ENCODE measurements at regions of chr5 and their contacts with region 1.

Region 1: GRCh38 chr5:123423278-123424149 is at the start of gene CEP120:
- DNase-seq: peak; percentile 96
- CTCF ChIP-seq: peak; percentile 82

Region 2: GRCh38 chr5:123387313-123387712 is 36.2 kb before region 1 on chr5:
- CTCF ChIA-PET with region 1: no interaction called
- POLR2A ChIA-PET with region 1: no interaction called
- DNase-seq: no peak
- CTCF ChIP-seq: no peak

Region 3: GRCh38 chr5:123398058-123398733 is 25.3 kb before region 1 on chr5:
- CTCF ChIA-PET with region 1: interaction called, 11 read pairs
- POLR2A ChIA-PET with region 1: no interaction called
- DNase-seq: no peak
- CTCF ChIP-seq: no peak

Region 4: GRCh38 chr5:123412206-123412605 is 11.3 kb before region 1 on chr5:
- CTCF ChIA-PET with region 1: interaction called, 13 read pairs
- POLR2A ChIA-PET with region 1: no interaction called
- DNase-seq: no peak
- CTCF ChIP-seq: no peak

Region 5: DNA sequence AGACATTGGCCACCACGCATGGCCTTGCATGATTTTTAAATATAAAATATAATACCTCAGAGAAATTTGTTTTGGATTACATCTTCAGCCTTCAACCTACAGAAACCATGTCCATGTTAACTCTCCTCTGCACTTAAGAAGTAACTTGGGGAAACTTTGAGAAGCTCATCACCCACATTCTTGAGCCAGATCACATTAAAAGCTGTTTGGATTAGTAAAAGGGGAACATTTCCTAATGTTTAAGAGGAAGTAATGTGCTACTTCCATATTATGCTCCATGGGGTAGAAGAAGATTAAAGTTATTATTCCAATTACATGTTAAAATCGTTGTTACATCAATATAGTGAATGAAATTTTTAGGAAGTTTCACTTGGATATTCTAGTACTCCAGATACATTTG is 10.1 kb after region 1 on chr5:
- CTCF ChIA-PET with region 1: interaction called, 29 read pairs
- POLR2A ChIA-PET with region 1: interaction called, 4 read pairs
- DNase-seq: no peak
- CTCF ChIP-seq: no peak

Region 6: DNA sequence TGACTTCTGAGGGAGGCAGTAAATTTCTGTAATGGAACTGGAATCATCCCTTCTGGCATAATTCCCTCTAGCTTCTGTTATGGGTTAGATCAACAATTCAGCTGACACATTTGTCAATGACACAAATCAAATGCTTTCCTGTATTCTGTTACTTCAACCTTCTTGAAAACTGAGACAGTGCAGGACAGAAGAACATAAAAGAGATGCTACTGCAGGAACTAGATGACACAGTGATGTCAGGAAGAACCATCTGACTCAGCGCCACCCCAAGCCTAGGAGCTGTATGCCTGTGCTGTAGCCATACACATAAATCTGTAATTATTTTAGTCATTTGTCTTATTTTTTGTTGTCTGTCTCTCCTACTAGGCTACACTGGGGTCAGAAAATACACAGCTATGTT is 17.9 kb after region 1 on chr5:
- CTCF ChIA-PET with region 1: interaction called, 29 read pairs
- POLR2A ChIA-PET with region 1: no interaction called
- DNase-seq: no peak
- CTCF ChIP-seq: no peak

Region 7: DNA sequence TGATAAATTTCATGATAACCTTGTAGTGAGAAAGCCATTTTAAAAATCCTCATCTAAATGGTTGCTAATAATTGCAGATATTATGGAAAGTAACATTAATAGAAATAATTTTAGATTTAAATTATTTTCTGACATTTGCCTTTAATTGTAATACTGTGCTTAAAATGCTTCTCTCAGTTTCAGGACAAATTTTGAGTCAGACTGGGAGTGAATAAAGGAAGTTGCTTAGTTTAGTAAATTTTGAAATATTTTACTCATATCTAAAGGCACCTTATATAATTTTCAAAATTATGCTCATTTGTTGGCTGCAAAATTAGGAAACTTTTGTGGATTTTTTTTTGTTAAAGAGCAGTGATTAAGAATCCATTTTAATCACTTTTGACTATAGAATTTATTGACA is 182.3 kb after region 1 on chr5:
- CTCF ChIA-PET with region 1: interaction called, 25 read pairs
- POLR2A ChIA-PET with region 1: no interaction called
- DNase-seq: peak; percentile 10
- CTCF ChIP-seq: no peak

Region 8: GRCh38 chr5:123610665-123611405 is 187.3 kb after region 1 on chr5:
- CTCF ChIA-PET with region 1: interaction called, 25 read pairs
- POLR2A ChIA-PET with region 1: no interaction called
- DNase-seq: peak; percentile 25
- CTCF ChIP-seq: peak; percentile 81

Region 9: GRCh38 chr5:123785162-123786021 is 361.9 kb after region 1 on chr5:
- CTCF ChIA-PET with region 1: no interaction called
- POLR2A ChIA-PET with region 1: no interaction called
- DNase-seq: no peak
- CTCF ChIP-seq: no peak

Measured in GM10248 (cell line).